ENCODE measurements at regions of chr1 and their contacts with region 1.

Region 1: DNA sequence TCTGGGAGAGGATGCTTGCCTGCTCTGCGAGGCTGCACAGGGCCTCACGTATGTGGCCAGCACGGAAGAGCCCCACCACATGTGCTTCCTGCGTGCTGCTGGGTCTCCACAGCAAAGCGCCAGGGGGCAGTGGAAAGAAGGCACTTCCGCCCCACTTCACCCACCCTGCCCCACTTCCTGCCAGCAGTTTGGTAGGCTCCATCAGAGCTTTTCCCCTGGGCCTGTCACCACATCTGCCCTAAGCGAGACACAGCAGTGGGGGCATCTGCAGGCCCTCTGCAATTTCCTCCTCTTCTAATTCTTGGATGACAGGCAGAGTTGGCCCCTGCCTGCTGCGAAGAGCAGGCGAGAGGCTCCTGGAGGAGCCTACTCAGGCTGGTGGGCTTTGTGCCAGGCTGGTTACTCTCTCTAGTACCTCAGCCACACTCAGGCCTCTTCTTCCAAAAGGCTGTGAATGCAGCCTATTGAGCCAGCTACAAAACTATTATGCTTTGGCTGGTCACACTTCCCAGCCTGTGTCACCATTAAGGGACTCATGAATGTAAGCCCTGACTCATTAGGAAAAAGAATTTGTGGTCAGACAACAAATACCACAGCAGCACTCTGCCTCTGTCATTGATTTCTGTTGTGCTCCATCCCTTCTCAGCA is 25.0 kb downstream of the CD244 start:
- DNase-seq: peak; percentile 96
- ATAC-seq: peak; percentile 93
- H3K4me3 Mint-ChIP-seq: peak overlapping the region; percentile 73
- H3K27ac Mint-ChIP-seq: peak overlapping the region; percentile 97
- H3K4me1 Mint-ChIP-seq: peaks cover 77% of the 10 kb centered on the region
- H3K27me3 Mint-ChIP-seq: no peaks in the 10 kb centered on the region

Region 2: GRCh38 chr1:159218649-159219636 is 1618.7 kb before region 1 on chr1:
- CTCF ChIA-PET with region 1: no interaction called
- POLR2A ChIA-PET with region 1: no interaction called
- DNase-seq: no peak
- ATAC-seq: no peak
- H3K4me3 Mint-ChIP-seq: no peak overlapping the region
- H3K27ac Mint-ChIP-seq: no peak overlapping the region
- H3K4me1 Mint-ChIP-seq: no peaks in the 10 kb centered on the region
- H3K27me3 Mint-ChIP-seq: peaks cover 3% of the 10 kb centered on the region

Region 3: GRCh38 chr1:160681067-160681890 is 156.4 kb before region 1 on chr1:
- CTCF ChIA-PET with region 1: interaction called, 26 read pairs
- POLR2A ChIA-PET with region 1: interaction called, 4 read pairs
- DNase-seq: peak; percentile 93
- ATAC-seq: peak; percentile 78
- H3K4me3 Mint-ChIP-seq: no peak overlapping the region
- H3K27ac Mint-ChIP-seq: peak overlapping the region; percentile 88
- H3K4me1 Mint-ChIP-seq: peaks cover 85% of the 10 kb centered on the region
- H3K27me3 Mint-ChIP-seq: no peaks in the 10 kb centered on the region

Region 4: DNA sequence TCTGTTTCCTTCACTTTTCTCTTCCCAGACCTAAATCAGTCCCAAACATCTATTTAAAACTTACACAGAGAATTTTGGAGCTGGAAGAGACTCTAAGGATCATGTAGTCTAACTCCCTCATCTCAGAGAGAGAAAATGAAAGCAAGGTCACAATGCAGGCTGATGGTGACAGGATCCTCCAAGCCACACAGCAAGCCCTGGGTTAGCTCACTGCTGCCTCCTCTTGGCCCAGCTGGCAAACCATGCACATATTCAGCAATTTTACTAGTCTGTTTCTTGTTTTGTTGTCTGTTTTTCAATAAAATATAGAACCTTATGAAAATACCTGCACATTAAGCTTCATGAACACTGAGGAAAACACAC is 69.4 kb before region 1 on chr1:
- CTCF ChIA-PET with region 1: interaction called, 32 read pairs
- POLR2A ChIA-PET with region 1: interaction called, 5 read pairs
- DNase-seq: peak; percentile 93
- ATAC-seq: peak; percentile 93
- H3K4me3 Mint-ChIP-seq: peak overlapping the region; percentile 82
- H3K27ac Mint-ChIP-seq: peak overlapping the region; percentile 95
- H3K4me1 Mint-ChIP-seq: peaks cover 46% of the 10 kb centered on the region
- H3K27me3 Mint-ChIP-seq: no peaks in the 10 kb centered on the region

Region 5: GRCh38 chr1:160821628-160822027 is 16.1 kb before region 1 on chr1:
- CTCF ChIA-PET with region 1: interaction called, 16 read pairs
- POLR2A ChIA-PET with region 1: no interaction called
- DNase-seq: no peak
- ATAC-seq: no peak
- H3K4me3 Mint-ChIP-seq: no peak overlapping the region
- H3K27ac Mint-ChIP-seq: no peak overlapping the region
- H3K4me1 Mint-ChIP-seq: peaks cover 4% of the 10 kb centered on the region
- H3K27me3 Mint-ChIP-seq: no peaks in the 10 kb centered on the region

Region 6: DNA sequence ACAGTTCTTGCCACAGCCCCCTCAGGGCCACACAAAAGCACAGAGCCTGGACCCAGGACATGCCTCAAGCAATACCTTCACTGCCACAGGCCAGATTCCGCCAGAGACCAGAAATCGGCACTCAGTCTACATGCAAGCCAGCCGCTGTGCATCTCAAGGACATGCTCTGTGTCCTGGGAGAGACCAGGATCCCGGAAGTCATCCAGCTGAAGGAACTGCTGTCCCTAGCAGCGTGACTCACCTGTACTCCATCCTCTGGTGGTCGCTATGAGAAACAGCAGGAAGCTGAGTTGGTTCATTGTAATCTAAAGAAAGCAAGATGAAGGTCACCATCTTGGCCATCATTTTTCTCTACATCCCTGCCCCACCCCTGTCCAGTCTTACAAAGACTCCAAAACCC is 46.9 kb after region 1 on chr1:
- CTCF ChIA-PET with region 1: interaction called, 189 read pairs
- POLR2A ChIA-PET with region 1: no interaction called
- DNase-seq: no peak
- ATAC-seq: no peak
- H3K4me3 Mint-ChIP-seq: no peak overlapping the region
- H3K27ac Mint-ChIP-seq: no peak overlapping the region
- H3K4me1 Mint-ChIP-seq: peaks cover 10% of the 10 kb centered on the region
- H3K27me3 Mint-ChIP-seq: peaks cover 4% of the 10 kb centered on the region

Region 7: GRCh38 chr1:161098210-161099068 is 260.8 kb after region 1 on chr1 and contains the start of gene KLHDC9:
- CTCF ChIA-PET with region 1: interaction called, 15 read pairs
- POLR2A ChIA-PET with region 1: no interaction called
- DNase-seq: peak; percentile 86
- ATAC-seq: peak; percentile 78
- H3K4me3 Mint-ChIP-seq: peak within 1 kb of the TSS; percentile 80
- H3K27ac Mint-ChIP-seq: peak within 1 kb of the TSS; percentile 91
- H3K4me1 Mint-ChIP-seq: peaks cover 30% of the 10 kb centered on the region
- H3K27me3 Mint-ChIP-seq: peaks cover 2% of the 10 kb centered on the region
- total RNA-seq, gene KLHDC9: 0.61 to 0.91 TPM